ENCODE measurements at regions of chr20 and their contacts with region 1.

Region 1: GRCh38 chr20:60352066-60352465 is 393.8 kb downstream of the CDH26 start:
- DNase-seq: no peak
- ATAC-seq: no peak
- H3K4me3 ChIP-seq: no peak overlapping the region
- H3K27ac ChIP-seq: no peak overlapping the region
- H3K4me1 ChIP-seq: no peaks in the 10 kb centered on the region
- H3K27me3 ChIP-seq: no peaks in the 10 kb centered on the region
- CTCF ChIP-seq: no peak
- EP300 ChIP-seq: no peak
- POLR2A ChIP-seq: no peak
- RAD21 ChIP-seq: no peak

Region 2: GRCh38 chr20:59242714-59243113 is 1109.4 kb before region 1 on chr20:
- CTCF ChIA-PET with region 1: no interaction called
- POLR2A ChIA-PET with region 1: no interaction called
- in situ Hi-C with region 1: no loop called
- intact Hi-C with region 1: no loop called
- DNase-seq: no peak
- ATAC-seq: no peak
- H3K4me3 ChIP-seq: no peak overlapping the region
- H3K27ac ChIP-seq: no peak overlapping the region
- H3K4me1 ChIP-seq: no peaks in the 10 kb centered on the region
- H3K27me3 ChIP-seq: peaks cover 1 to 43% of the 10 kb centered on the region in 2 experiments; a peak in 4 of 5 replicates
- CTCF ChIP-seq: no peak
- EP300 ChIP-seq: no peak
- POLR2A ChIP-seq: no peak
- RAD21 ChIP-seq: no peak

Region 3: DNA sequence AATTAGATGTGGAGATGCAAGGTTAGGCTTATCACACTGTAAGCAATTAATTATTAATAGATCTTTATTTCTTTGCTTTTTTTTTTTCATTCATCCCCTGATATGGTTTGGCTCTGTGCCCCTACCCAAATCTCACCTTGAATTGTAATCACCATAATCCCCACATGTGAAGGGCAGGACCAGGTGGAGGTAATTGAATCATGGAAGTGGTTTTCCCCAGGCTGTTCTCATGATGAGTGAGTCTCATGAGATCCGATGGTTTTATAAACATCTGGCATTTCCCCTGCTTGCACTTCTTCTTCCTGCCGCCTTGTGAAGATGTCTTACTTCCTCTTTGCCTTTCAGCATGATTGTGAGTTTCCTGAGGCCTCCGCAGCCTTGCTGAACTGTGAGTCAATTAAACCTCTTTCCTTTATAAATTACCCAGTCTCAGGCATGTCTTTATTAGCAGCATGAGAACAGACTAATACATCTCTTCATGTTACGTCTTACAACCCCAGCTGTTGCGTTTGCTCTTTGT is 60.0 kb before region 1 on chr20:
- CTCF ChIA-PET with region 1: no interaction called
- POLR2A ChIA-PET with region 1: no interaction called
- in situ Hi-C with region 1: no loop called
- intact Hi-C with region 1: no loop called
- DNase-seq: no peak
- ATAC-seq: no peak
- H3K4me3 ChIP-seq: no peak overlapping the region
- H3K27ac ChIP-seq: no peak overlapping the region
- H3K4me1 ChIP-seq: no peaks in the 10 kb centered on the region
- H3K27me3 ChIP-seq: no peaks in the 10 kb centered on the region
- CTCF ChIP-seq: no peak
- EP300 ChIP-seq: no peak
- POLR2A ChIP-seq: no peak
- RAD21 ChIP-seq: no peak

Region 4: DNA sequence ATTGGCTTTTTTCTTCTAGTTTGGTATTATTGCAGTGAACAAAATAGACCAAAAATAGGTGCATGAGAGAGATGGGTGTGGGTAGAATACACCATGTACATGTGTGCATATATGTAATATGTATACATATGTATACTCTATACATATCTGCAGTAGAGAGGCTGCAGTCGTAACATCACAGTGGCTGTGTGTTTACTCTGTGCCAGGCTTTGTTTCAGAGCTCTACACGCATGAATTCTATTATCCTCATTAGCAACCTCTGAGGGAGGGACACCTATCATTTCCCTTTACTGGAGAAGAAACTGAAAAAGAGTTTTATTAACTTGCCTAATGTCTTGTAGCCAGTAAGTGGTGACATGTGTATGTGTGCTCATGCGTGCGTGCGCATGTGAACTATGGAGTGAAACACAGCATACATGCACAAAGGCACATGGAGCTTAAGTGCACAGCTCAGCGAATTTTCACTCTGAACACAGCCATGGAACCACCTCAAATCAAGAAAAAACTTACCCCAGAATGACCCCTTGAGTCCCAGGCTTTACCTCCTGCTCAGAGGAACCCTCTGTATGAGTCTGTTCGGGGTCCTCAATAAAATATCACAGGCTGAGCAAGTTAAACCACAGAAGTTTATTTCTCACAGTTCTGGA is 58.7 kb after region 1 on chr20:
- CTCF ChIA-PET with region 1: no interaction called
- POLR2A ChIA-PET with region 1: no interaction called
- in situ Hi-C with region 1: loop called (anchors 10 kb)
- intact Hi-C with region 1: no loop called
- DNase-seq: no peak
- ATAC-seq: no peak
- H3K4me3 ChIP-seq: no peak overlapping the region
- H3K27ac ChIP-seq: no peak overlapping the region
- H3K4me1 ChIP-seq: no peaks in the 10 kb centered on the region
- H3K27me3 ChIP-seq: no peaks in the 10 kb centered on the region
- CTCF ChIP-seq: no peak
- EP300 ChIP-seq: no peak
- POLR2A ChIP-seq: no peak
- RAD21 ChIP-seq: no peak

Measured in HepG2 (cell line).